ENCODE measurements at regions of chr12 and their contacts with region 1.

Region 1: GRCh38 chr12:53379389-53380103 is 430 bp upstream of the SP1 start:
- DNase-seq: peak; percentile 97 to 100
- ATAC-seq: peak; percentile 87 to 92
- H3K4me3 ChIP-seq: peak overlapping the region; percentile 70
- H3K27ac ChIP-seq: peak overlapping the region; percentile 95 to 99
- H3K4me1 ChIP-seq: peaks cover 32% of the 10 kb centered on the region
- CTCF ChIP-seq: no peak
- EP300 ChIP-seq: no peak
- POLR2A ChIP-seq: peak; percentile 82
- RAD21 ChIP-seq: no peak

Region 2: GRCh38 chr12:53344824-53345485 is 34.6 kb before region 1 on chr12:
- CTCF ChIA-PET with region 1: interaction called, 199 read pairs
- POLR2A ChIA-PET with region 1: interaction called, 17 read pairs
- DNase-seq: peak; percentile 68 to 76
- ATAC-seq: peak; percentile 87 to 88
- H3K4me3 ChIP-seq: peak overlapping the region; percentile 64
- H3K27ac ChIP-seq: peak overlapping the region; percentile 81 to 93
- H3K4me1 ChIP-seq: peaks cover 9% of the 10 kb centered on the region; the same call in 2 of the 3 replicates
- CTCF ChIP-seq: peak; percentile 74
- EP300 ChIP-seq: no peak
- POLR2A ChIP-seq: peak; percentile 59
- RAD21 ChIP-seq: peak; percentile 74 to 79

Region 3: DNA sequence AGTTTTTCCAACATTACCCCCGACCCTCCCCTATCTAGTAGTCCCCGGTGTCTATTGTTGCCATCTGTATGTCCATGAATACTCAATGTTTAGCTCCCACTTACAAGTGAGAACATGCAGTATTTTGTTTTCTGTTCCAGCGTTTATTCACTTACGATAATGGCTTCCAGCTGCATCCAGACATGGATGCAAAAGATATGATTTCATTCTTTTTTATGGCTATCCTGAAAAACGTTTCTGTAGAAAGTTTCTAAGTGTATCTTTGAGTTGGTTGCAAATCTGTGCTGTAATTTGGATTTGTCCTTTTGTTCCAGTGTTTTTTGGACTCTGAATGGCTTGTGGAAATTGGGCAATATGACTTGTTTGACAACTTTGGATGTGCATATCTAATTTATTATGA is 12.2 kb after region 1 on chr12:
- CTCF ChIA-PET with region 1: interaction called, 22 read pairs
- POLR2A ChIA-PET with region 1: no interaction called
- DNase-seq: no peak
- ATAC-seq: no peak
- H3K4me3 ChIP-seq: no peak overlapping the region
- H3K27ac ChIP-seq: no peak overlapping the region
- H3K4me1 ChIP-seq: peaks cover 32% of the 10 kb centered on the region; the same call in 2 of the 3 replicates
- CTCF ChIP-seq: no peak
- EP300 ChIP-seq: no peak
- POLR2A ChIP-seq: no peak
- RAD21 ChIP-seq: no peak

Region 4: DNA sequence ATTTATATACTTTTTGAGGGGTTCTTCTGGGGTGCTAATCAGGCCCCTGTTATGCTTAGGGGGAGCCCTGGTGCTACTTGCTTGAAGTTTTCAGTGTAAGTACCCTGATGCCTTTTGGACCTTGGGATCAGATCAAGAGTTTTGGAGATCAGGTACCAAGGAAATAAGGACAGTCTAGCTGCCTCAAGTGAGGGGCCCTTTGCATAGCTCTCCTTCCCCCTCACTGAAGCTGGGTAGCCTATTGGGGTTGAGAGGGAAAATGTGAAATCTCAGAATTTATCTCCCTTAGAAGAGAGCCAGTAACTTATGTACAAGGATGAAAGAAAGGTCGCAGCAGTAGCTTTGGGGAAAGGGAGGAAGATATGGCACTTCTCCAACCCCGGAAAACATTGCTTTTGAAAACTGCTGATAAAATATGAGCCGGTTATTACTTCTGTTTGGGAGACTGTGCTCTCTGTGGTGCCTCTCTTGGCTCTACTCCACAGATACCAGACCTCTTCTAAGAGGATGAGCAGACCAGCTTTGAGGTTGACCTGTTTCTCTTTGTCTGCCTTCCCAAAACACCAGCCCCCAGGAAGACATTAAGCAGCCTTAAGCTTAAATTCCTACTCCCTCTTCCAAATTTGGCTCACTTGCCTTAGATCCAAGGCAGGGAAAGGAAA is 35.3 kb after region 1 on chr12:
- CTCF ChIA-PET with region 1: interaction called, 60 read pairs
- POLR2A ChIA-PET with region 1: interaction called, 3 read pairs
- DNase-seq: no peak
- ATAC-seq: no peak; a peak in 1 of 6 replicates
- H3K4me3 ChIP-seq: no peak overlapping the region
- H3K27ac ChIP-seq: no peak overlapping the region
- H3K4me1 ChIP-seq: peaks cover 45% of the 10 kb centered on the region
- CTCF ChIP-seq: no peak
- EP300 ChIP-seq: no peak
- POLR2A ChIP-seq: no peak
- RAD21 ChIP-seq: no peak

Region 5: GRCh38 chr12:53427905-53428594 is 48.5 kb after region 1 on chr12:
- CTCF ChIA-PET with region 1: interaction called, 60 read pairs
- POLR2A ChIA-PET with region 1: interaction called, 5 read pairs
- DNase-seq: peak; percentile 89 to 91
- ATAC-seq: peak; percentile 94 to 96
- H3K4me3 ChIP-seq: no peak overlapping the region
- H3K27ac ChIP-seq: peak overlapping the region; percentile 71 to 85
- H3K4me1 ChIP-seq: peaks cover 45% of the 10 kb centered on the region
- CTCF ChIP-seq: no peak
- EP300 ChIP-seq: no peak
- POLR2A ChIP-seq: no peak
- RAD21 ChIP-seq: 0 out of 5 replicates have a peak, but pooled peaks of 1 of the 2 experiments have one; percentile 12

Region 6: DNA sequence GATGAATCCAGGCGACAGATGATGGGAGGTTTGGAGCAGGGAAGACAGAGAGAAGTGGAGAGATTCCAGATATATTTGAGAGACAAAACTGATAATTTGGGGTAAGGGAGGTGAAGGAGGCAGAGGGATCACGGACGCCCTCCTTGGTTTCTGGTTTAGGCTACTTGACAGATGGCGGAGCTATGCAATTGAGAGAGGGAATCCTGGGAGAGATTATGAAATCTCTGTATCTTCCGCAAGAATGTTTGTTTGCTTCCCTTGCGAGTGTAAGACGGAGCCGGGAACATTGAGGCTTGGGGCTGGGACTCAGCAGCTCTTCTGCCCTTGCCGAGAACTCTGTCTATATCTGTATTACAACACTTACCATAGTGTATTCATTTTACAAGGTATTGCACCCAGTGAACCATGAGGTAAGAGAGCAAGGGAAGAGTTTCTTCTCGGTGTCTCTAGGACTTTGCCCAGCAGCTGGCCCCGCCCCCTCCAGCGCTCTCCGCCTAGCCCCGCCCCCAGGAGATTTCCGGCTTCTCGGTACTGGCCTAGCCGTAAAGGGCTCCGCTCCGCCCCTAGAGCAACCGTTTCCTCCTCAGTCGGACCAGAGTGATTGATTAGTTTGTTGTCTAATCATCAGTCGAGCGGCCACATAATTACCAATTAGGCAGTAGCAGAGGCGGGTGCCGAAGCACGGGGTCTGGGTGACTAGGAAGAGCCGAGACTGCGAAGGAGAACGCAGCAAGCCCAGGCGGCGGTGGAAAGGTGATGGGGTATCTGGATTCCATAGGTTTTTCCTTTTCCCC is 61.7 kb after region 1 on chr12 and contains the start of gene PRR13:
- CTCF ChIA-PET with region 1: interaction called, 5 read pairs
- POLR2A ChIA-PET with region 1: interaction called, 14 read pairs
- DNase-seq: peak; percentile 99 to 100
- ATAC-seq: peak; percentile 96
- H3K4me3 ChIP-seq: peak within 1 kb of the TSS; percentile 71
- H3K27ac ChIP-seq: peak within 1 kb of the TSS; percentile 91 to 93
- H3K4me1 ChIP-seq: peaks cover 26% of the 10 kb centered on the region
- CTCF ChIP-seq: 0 out of 3 replicates have a peak, but pooled peaks have one; percentile 8
- EP300 ChIP-seq: no peak
- POLR2A ChIP-seq: peak; percentile 95
- RAD21 ChIP-seq: no peak
- polyA plus RNA-seq, gene PRR13: 203 and 257 TPM in 2 replicates

Region 7: GRCh38 chr12:53500776-53501614 is 121.4 kb after region 1 on chr12 and contains the start of gene TARBP2:
- CTCF ChIA-PET with region 1: no interaction called
- POLR2A ChIA-PET with region 1: interaction called, 14 read pairs
- DNase-seq: peak; percentile 96 to 100
- ATAC-seq: peak; percentile 73 to 82
- H3K4me3 ChIP-seq: peak within 1 kb of the TSS; percentile 64
- H3K27ac ChIP-seq: peak within 1 kb of the TSS; percentile 94 to 96
- H3K4me1 ChIP-seq: peaks cover 45% of the 10 kb centered on the region
- CTCF ChIP-seq: no peak
- EP300 ChIP-seq: no peak
- POLR2A ChIP-seq: peak; percentile 72
- RAD21 ChIP-seq: no peak
- polyA plus RNA-seq, gene TARBP2: 41.5 and 51.2 TPM in 2 replicates